Naive thymus-derived CD4-positive, alpha-beta T cell (primary cell): ENCODE measurements at regions of chr3 and their contacts with region 1.

Region 1: GRCh38 chr3:42502429-42503250 is at the start of gene VIPR1:
- DNase-seq: peak; percentile 85 to 97 (median 95)
- ATAC-seq: peak; percentile 98
- H3K4me3 ChIP-seq: peak within 1 kb of the TSS; percentile 70
- H3K4me3 Mint-ChIP-seq: peak within 1 kb of the TSS; percentile 91 to 98 (median 96)
- H3K27ac ChIP-seq: peak within 1 kb of the TSS; percentile 79
- H3K27ac Mint-ChIP-seq: peak within 1 kb of the TSS; percentile 70 to 96 (median 94)
- H3K4me1 ChIP-seq: peaks cover 0 to 39% of the 10 kb centered on the region in 2 donors
- H3K4me1 Mint-ChIP-seq: peaks cover 31 to 64% (median 47%) of the 10 kb centered on the region in 7 donors
- H3K27me3 ChIP-seq: peaks cover 0 to 5% of the 10 kb centered on the region in 2 donors
- H3K27me3 Mint-ChIP-seq: peaks cover 18 to 49% (median 20%) of the 10 kb centered on the region in 5 donors
- total RNA-seq, gene VIPR1: 8.0 to 133 (median 70.5) TPM

Region 2: GRCh38 chr3:42012935-42013690 is 489.5 kb before region 1 on chr3:
- CTCF ChIA-PET with region 1: no interaction called
- POLR2A ChIA-PET with region 1: no interaction called
- intact Hi-C with region 1: loop called in 1 of 2 experiments (anchors 10 kb)
- DNase-seq: peak; percentile 36 to 65 (median 58)
- ATAC-seq: peak; percentile 88
- H3K4me3 ChIP-seq: peak overlapping the region; percentile 78
- H3K4me3 Mint-ChIP-seq: peak overlapping the region; percentile 86 to 95 (median 90)
- H3K27ac ChIP-seq: peak overlapping the region; percentile 78
- H3K27ac Mint-ChIP-seq: peak overlapping the region; percentile 84 to 98 (median 93)
- H3K4me1 ChIP-seq: peaks cover 10 to 15% of the 10 kb centered on the region in 2 donors
- H3K4me1 Mint-ChIP-seq: peaks cover 19 to 39% (median 37%) of the 10 kb centered on the region in 7 donors
- H3K27me3 ChIP-seq: no peaks in the 10 kb centered on the region
- H3K27me3 Mint-ChIP-seq: no peaks in the 10 kb centered on the region

Region 3: GRCh38 chr3:42526616-42527367 is 24.2 kb after region 1 on chr3:
- CTCF ChIA-PET with region 1: interaction called, 10 read pairs
- POLR2A ChIA-PET with region 1: interaction called, 26 read pairs
- intact Hi-C with region 1: no loop called
- DNase-seq: peak in 7 of 9 donors; percentile 36 to 51 (median 44)
- ATAC-seq: peak; percentile 77
- H3K4me3 ChIP-seq: peak overlapping the region; percentile 23
- H3K4me3 Mint-ChIP-seq: peak overlapping the region; percentile 66 to 86 (median 73)
- H3K27ac ChIP-seq: peak overlapping the region; percentile 60
- H3K27ac Mint-ChIP-seq: peak overlapping the region; percentile 86 to 99 (median 92)
- H3K4me1 ChIP-seq: peaks cover 42 to 59% of the 10 kb centered on the region in 2 donors
- H3K4me1 Mint-ChIP-seq: peaks cover 39 to 83% (median 67%) of the 10 kb centered on the region in 7 donors
- H3K27me3 ChIP-seq: no peaks in the 10 kb centered on the region
- H3K27me3 Mint-ChIP-seq: no peaks in the 10 kb centered on the region

Region 4: DNA sequence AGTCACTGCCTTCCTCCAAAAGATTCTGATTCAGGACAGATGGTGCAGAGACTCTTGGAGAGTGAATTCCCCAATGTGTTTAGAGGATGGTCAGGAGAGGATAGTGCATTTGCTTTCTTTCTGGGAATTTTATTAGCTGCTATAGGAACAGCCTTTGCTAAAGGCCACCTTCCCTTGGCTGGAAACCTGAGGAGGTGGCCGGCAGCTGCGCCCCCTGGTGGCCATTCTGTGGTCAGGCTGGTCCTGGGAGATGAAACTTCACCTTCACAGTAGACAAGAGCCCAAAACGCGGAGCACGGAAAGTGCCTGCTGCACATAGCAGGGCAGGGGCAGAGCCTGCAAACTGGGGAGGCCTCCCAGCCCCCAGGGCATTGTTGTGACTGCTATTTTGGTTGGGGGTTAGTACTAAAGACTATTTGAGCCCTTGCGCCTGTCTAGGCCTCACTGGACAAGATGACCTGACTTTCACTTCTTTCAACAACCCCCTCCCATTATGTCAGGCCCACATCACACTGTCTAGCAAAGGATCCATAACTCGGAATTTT is 44.8 kb after region 1 on chr3:
- CTCF ChIA-PET with region 1: interaction called, 108 read pairs
- POLR2A ChIA-PET with region 1: interaction called, 59 read pairs
- intact Hi-C with region 1: loop called in 1 of 2 experiments (anchors 1 kb)
- DNase-seq: peak; percentile 37 to 73 (median 57)
- ATAC-seq: peak; percentile 84
- H3K4me3 ChIP-seq: no peak overlapping the region
- H3K4me3 Mint-ChIP-seq: no peak overlapping the region
- H3K27ac ChIP-seq: no peak overlapping the region
- H3K27ac Mint-ChIP-seq: peak overlapping the region in 4 of 9 donors; percentile 14 to 37 (median 29)
- H3K4me1 ChIP-seq: no peaks in the 10 kb centered on the region
- H3K4me1 Mint-ChIP-seq: peaks cover 0 to 15% (median 6%) of the 10 kb centered on the region in 7 donors
- H3K27me3 ChIP-seq: no peaks in the 10 kb centered on the region
- H3K27me3 Mint-ChIP-seq: no peaks in the 10 kb centered on the region

Region 5: GRCh38 chr3:42590989-42591756 is 88.5 kb after region 1 on chr3:
- CTCF ChIA-PET with region 1: interaction called, 5 read pairs
- POLR2A ChIA-PET with region 1: interaction called, 6 read pairs
- intact Hi-C with region 1: loop called in 1 of 2 experiments (anchors 1 kb)
- DNase-seq: no peak
- ATAC-seq: peak; percentile 26
- H3K4me3 ChIP-seq: peak overlapping the region; percentile 55
- H3K4me3 Mint-ChIP-seq: peak overlapping the region; percentile 84 to 100 (median 94)
- H3K27ac ChIP-seq: peak overlapping the region; percentile 77
- H3K27ac Mint-ChIP-seq: peak overlapping the region; percentile 59 to 100 (median 94)
- H3K4me1 ChIP-seq: peaks cover 13 to 14% of the 10 kb centered on the region in 2 donors
- H3K4me1 Mint-ChIP-seq: peaks cover 8 to 47% (median 38%) of the 10 kb centered on the region in 7 donors
- H3K27me3 ChIP-seq: no peaks in the 10 kb centered on the region
- H3K27me3 Mint-ChIP-seq: no peaks in the 10 kb centered on the region

Region 6: DNA sequence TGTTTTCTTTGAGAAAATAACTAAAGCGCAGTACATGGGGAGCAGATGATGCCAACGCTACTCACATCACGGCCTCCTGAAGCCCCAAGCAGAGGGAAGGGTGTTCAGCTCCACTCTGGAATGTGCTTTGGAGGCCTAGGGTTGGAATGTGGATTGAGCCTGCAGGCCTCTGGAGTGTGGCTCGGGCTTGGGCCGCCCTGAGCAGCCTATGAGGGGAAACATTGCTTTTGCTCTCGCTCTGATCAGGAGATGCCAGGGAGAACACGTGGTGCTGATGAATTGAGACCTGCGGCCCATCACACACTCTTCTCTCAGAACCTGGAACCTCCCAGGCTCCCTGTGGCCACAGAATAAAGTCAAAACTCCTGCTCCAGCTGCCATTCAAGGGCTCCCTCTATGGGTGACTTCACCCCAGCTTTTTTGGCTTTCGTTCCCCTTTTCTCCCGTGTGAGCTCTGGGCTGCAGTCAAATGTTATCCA is 247.2 kb after region 1 on chr3:
- CTCF ChIA-PET with region 1: no interaction called
- POLR2A ChIA-PET with region 1: interaction called, 3 read pairs
- intact Hi-C with region 1: loop called (anchors 1 to 5 kb)
- DNase-seq: no peak
- ATAC-seq: peak; percentile 63
- H3K4me3 ChIP-seq: no peak overlapping the region
- H3K4me3 Mint-ChIP-seq: peak overlapping the region in 1 of 10 donors; percentile 12
- H3K27ac ChIP-seq: no peak overlapping the region
- H3K27ac Mint-ChIP-seq: peak overlapping the region in 4 of 9 donors; percentile 17 to 65 (median 36)
- H3K4me1 ChIP-seq: peaks cover 15 to 38% of the 10 kb centered on the region in 2 donors
- H3K4me1 Mint-ChIP-seq: peaks cover 16 to 40% (median 31%) of the 10 kb centered on the region in 7 donors
- H3K27me3 ChIP-seq: no peaks in the 10 kb centered on the region
- H3K27me3 Mint-ChIP-seq: no peaks in the 10 kb centered on the region